ENCODE measurements at regions of chr2 and their contacts with region 1.

Region 1: DNA sequence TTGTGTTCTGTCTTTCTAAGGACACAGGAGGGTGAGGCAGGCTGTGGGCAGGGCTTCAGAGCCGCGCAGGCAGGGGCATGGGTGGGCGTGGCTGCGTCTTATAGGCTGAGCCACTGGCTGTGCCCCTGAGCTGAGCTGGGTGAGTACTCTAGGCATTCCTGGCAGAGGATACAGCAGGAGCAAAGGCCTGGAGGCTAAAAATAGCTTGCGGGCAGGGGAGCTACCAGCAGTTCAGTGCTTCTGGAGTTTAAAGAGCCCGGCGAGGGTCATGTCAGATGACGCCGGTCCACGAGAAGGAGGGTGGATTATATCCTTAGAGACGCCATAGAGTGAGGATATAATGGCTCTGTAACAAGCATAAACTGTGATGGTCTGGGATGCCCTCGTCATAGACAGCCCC is 31.5 kb upstream of the PDIA6 start:
- DNase-seq: peak; percentile 78
- H3K4me3 ChIP-seq: no peak overlapping the region
- H3K27ac ChIP-seq: no peak overlapping the region
- H3K4me1 ChIP-seq: no peaks in the 10 kb centered on the region
- H3K27me3 ChIP-seq: no peaks in the 10 kb centered on the region
- CTCF ChIP-seq: no peak

Region 2: GRCh38 chr2:10859294-10859693 is 15.2 kb after region 1 on chr2:
- CTCF ChIA-PET with region 1: no interaction called
- POLR2A ChIA-PET with region 1: interaction called, 11 read pairs
- intact Hi-C with region 1: no loop called
- DNase-seq: no peak
- H3K4me3 ChIP-seq: no peak overlapping the region
- H3K27ac ChIP-seq: no peak overlapping the region
- H3K4me1 ChIP-seq: no peaks in the 10 kb centered on the region
- H3K27me3 ChIP-seq: no peaks in the 10 kb centered on the region
- CTCF ChIP-seq: no peak